Pancreas (tissue), 10 donors: ENCODE measurements at regions of chr11 and their contacts with region 1.

Region 1: DNA sequence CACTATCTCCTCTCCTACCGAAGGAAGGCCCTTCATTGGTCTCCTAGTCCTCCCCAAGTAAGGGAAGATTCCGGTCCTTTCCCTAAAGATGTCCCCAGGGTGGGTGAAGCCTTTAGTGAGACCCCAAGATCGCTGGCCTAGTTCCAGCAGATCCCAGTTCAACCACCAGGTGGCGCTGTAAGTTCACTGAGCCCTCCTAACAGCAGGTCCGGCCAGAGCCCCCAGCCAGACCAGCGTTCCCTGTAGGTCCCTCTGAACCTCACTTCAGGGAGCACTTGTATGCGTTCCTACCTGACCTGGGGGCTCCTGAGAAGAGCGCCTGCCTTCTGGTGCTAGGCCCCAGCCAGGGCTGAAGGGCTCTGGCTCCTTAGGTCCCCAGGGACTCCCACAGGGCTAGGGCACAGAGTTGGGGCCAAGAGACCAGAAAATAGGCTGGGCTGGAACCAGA is 38.1 kb downstream of the LMO1 start:
- DNase-seq: peak; percentile 49 to 88 (median 77)
- ATAC-seq: peak; percentile 25 to 71 (median 68)
- H3K4me3 ChIP-seq: no peak overlapping the region
- H3K27ac ChIP-seq: no peak overlapping the region
- H3K4me1 ChIP-seq: no peaks in the 10 kb centered on the region
- H3K27me3 ChIP-seq: no peaks in the 10 kb centered on the region
- CTCF ChIP-seq: peak; percentile 91 to 96 (median 95)

Region 2: DNA sequence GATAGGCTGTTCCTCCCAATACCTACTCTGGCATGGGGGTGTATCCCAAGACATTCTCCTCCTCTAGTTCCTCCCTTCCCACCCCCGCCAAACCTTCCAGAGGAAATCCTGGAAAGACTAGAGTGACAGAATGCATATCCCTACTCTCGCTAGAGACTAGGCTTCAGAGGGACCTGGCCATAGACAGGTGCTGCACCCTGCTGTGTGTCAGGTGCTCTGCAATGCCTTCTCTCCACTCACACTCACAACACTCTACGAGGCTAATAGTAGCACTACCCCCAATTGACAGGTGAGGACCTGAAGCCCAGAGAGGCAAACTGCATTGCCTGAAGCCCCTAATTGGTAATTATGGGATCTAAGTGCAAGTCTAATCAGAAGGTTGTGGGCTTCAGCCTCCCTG is 84.2 kb after region 1 on chr11:
- intact Hi-C with region 1: loop called in 2 of 3 experiments (anchors 5 to 10 kb)
- DNase-seq: peak in 2 of 6 donors; percentile 44 to 48
- ATAC-seq: peak; percentile 60 to 90 (median 90)
- H3K4me3 ChIP-seq: no peak overlapping the region
- H3K27ac ChIP-seq: no peak overlapping the region
- H3K4me1 ChIP-seq: no peaks in the 10 kb centered on the region
- H3K27me3 ChIP-seq: no peaks in the 10 kb centered on the region
- CTCF ChIP-seq: peak in 3 of 4 donors; percentile 18 to 34 (median 32)

Region 3: GRCh38 chr11:8318336-8318935 is 92.8 kb after region 1 on chr11:
- intact Hi-C with region 1: loop called in 2 of 3 experiments (anchors 5 to 10 kb)
- DNase-seq: peak in 1 of 6 donors; percentile 56
- ATAC-seq: peak in 2 of 4 donors; percentile 26 to 42
- H3K4me3 ChIP-seq: no peak overlapping the region
- H3K27ac ChIP-seq: no peak overlapping the region
- H3K4me1 ChIP-seq: no peaks in the 10 kb centered on the region
- H3K27me3 ChIP-seq: no peaks in the 10 kb centered on the region
- CTCF ChIP-seq: no peak